GM10248 (cell line): ENCODE measurements at regions of chr1 and their contacts with region 1.

Region 1: GRCh38 chr1:47219590-47220220 is 12.3 kb downstream of the TAL1 start:
- DNase-seq: no peak
- CTCF ChIP-seq: no peak

Region 2: DNA sequence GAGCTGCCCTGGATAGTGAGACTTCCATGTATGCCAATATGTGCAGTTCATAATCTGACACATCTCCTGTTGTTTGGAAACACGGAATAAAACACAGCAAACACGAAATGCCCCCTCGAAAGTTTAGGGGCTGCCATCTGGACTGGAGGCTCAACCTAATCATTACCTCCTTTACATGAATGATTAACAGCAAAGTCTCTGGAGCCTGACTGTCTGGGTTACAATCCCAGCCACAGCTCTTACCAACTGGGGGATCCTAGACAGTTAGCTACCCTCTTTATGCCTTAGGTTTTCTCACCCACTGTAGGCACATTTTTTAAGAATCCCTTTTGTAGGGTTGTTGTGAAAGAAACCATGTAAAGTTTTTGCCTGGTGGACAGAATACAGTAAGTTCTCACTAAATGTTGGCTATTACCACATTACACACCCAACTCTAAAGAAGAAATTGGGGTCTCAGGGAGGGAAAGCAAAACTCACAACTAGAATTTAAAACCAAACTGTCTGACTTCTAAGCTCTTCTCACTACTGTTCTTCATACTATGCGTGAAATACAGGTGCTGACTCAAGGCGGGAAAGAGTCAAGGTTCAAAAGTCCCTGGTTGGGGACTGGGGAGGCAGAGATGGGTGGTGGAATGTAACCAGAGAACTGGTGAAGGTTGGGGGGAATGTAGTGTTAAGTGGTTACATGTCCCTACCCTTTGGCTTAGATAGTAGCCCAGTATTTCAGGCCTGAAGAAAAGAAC is 58.2 kb before region 1 on chr1:
- CTCF ChIA-PET with region 1: no interaction called
- POLR2A ChIA-PET with region 1: no interaction called
- DNase-seq: no peak
- CTCF ChIP-seq: no peak

Region 3: DNA sequence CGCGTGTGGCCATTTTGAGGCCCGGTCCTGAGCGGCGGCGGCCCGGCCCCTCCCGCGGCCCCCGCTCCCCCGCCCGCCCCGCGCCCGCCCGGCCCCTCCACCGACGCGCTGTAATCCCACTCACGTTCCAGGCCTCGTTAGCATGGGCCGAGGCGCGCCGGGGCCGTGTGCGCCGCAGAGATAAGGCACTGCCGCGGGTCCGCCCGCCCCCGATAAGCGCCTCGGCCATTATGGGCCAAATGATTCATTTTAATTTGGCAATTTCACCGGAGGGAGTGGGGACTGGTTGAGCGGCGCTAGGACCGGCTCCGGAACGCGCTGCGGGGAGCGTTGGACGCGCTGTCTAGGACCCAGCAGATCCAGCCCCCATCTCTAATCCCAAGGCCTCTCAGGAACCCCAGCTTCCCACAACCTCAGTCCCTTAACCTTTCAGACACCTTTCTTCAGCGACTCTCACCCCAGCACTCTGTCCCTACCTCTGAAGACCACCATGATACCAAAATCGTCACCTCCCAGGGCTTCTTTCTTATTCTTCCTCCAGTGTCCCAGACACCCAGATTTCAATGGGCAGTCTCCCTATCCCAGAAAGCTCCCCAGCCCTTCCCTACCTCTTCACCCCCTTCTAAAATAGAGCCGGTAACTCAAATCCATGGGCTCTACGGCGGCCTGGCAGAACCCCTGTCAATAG is 12.6 kb after region 1 on chr1 and contains the start of gene TAL1:
- CTCF ChIA-PET with region 1: interaction called, 14 read pairs
- POLR2A ChIA-PET with region 1: no interaction called
- DNase-seq: no peak
- CTCF ChIP-seq: no peak